ENCODE measurements at regions of chr2 and their contacts with region 1.

Region 1: GRCh38 chr2:46812361-46813024 is 103.1 kb downstream of the MCFD2 start:
- DNase-seq: peak; percentile 85 to 93
- H3K4me3 ChIP-seq: peak overlapping the region in 1 of 2 donors; percentile 20
- H3K27ac ChIP-seq: peak overlapping the region; percentile 89 to 90
- H3K4me1 ChIP-seq: peaks cover 0 to 60% (median 53%) of the 10 kb centered on the region in 4 donors
- H3K27me3 ChIP-seq: no peaks in the 10 kb centered on the region
- CTCF ChIP-seq: no peak

Region 2: GRCh38 chr2:46569061-46569560 is 243.4 kb before region 1 on chr2:
- intact Hi-C with region 1: no loop called
- DNase-seq: no peak
- H3K4me3 ChIP-seq: no peak overlapping the region
- H3K27ac ChIP-seq: peak overlapping the region; percentile 61 to 62
- H3K4me1 ChIP-seq: peaks cover 0 to 94% (median 39%) of the 10 kb centered on the region in 4 donors
- H3K27me3 ChIP-seq: no peaks in the 10 kb centered on the region
- CTCF ChIP-seq: no peak

Region 3: DNA sequence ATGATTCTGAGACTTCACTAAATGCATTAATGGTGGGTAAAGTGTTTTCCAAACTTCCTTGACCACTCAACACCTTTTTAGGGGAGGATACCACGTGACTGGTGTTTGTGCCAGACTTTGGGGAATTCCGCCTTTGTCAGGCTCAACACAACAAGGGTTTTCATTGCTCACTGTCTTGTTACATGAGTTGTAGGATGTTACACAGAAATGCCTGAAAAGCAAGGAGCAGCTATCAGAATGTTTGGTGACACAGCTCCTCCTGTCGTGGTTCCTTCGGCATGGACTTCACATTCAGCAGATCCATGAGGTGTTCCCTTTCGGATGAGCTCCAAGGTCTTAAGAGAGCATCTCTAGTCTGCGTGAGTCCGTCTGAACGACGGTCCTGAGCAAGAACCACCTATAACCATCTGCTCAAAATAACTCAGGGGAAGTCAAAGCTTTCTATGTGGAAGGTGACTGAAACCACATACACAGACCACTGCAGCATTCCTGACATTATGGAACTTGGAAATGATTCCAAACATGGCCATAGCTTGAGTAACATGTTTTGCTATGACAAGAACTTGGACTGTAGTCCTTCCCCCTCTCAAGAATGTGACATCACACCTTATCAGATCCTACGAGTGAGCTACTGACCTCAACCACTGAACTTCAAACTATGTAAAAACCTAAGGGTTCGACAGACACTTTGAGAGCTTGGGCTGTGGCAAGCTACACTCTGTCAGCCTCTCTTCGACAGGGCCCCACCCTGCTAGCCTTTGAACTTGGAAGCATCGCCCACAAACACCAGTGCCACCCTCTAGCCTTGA is 45.6 kb after region 1 on chr2:
- intact Hi-C with region 1: loop called (anchors 5 kb)
- DNase-seq: no peak
- H3K4me3 ChIP-seq: no peak overlapping the region
- H3K27ac ChIP-seq: peak overlapping the region; percentile 78 to 84
- H3K4me1 ChIP-seq: peaks cover 0 to 60% (median 38%) of the 10 kb centered on the region in 4 donors
- H3K27me3 ChIP-seq: no peaks in the 10 kb centered on the region
- CTCF ChIP-seq: no peak

Region 4: DNA sequence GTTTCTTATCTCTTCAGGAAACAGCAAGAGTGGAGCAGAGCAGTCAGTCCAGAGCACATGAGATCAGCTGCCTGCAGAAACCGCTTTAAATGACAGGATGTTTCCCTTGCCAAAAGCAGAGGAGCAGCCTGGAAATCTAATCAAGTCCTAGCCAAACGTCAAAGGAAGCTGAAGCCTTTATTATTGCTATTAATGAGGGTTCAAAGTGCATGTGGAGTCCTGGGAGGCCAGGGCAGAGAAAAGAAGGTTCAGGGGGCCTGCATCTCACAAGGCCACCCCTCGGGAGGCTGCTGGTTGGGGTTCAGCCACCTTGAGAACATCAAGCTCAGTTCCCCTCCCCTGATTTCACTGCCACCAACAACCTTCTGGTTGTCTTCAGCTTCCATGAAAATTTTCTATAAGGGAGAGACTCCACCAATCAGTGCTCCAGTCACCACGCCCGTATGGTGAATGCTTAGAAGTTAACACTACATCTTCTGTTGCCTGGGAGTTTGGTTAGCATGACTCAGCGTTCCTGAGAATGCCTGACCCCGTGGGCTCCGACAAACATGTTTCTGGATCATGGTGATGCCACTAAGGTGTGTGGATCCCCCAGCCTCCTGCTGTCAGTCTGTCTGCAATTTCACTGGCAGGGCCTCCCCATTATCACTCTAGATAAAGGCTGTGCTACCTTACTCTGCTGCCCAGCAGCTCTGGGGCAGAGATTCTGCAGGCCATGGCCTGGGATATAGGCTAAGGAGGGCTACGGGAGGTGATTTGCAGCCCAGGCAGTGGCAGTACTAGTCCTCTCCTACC is 276.4 kb after region 1 on chr2:
- intact Hi-C with region 1: no loop called
- DNase-seq: no peak
- H3K4me3 ChIP-seq: no peak overlapping the region
- H3K27ac ChIP-seq: peak overlapping the region; percentile 2 to 24
- H3K4me1 ChIP-seq: peaks cover 0 to 43% (median 20%) of the 10 kb centered on the region in 4 donors
- H3K27me3 ChIP-seq: no peaks in the 10 kb centered on the region
- CTCF ChIP-seq: no peak

Measured in tibial artery (tissue), 4 donors.